Breast epithelium (tissue), 4 donors: ENCODE measurements at regions of chr2 and their contacts with region 1.

Region 1: GRCh38 chr2:83899271-83899670 is 559.8 kb downstream of the SUCLG1 start:
- DNase-seq: no peak
- H3K4me3 ChIP-seq: no peak overlapping the region
- H3K27ac ChIP-seq: no peak overlapping the region
- H3K4me1 ChIP-seq: no peaks in the 10 kb centered on the region
- H3K27me3 ChIP-seq: no peaks in the 10 kb centered on the region
- CTCF ChIP-seq: no peak
- POLR2A ChIP-seq: no peak

Region 2: DNA sequence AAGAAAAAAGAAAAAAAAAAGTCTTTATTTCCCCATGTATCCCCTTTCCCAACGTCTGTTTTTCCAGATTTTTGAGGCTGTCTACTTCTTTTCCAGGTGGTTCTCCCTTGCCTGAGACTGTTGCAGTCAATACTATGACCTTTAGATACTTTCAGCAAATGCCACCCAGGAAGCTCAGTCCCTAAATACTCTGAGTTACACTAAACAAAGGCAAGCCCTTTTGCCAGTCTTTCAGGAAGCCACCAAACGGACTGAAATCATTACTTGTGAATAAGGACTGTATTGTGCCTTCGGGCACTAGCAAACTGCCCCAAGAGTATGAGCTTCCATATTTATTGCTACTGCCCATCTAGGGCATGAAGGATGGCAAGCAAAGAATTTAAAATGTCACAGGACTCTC is 61.4 kb before region 1 on chr2:
- intact Hi-C with region 1: no loop called
- DNase-seq: no peak
- H3K4me3 ChIP-seq: no peak overlapping the region
- H3K27ac ChIP-seq: no peak overlapping the region
- H3K4me1 ChIP-seq: no peaks in the 10 kb centered on the region
- H3K27me3 ChIP-seq: no peaks in the 10 kb centered on the region
- CTCF ChIP-seq: no peak
- POLR2A ChIP-seq: no peak

Region 3: DNA sequence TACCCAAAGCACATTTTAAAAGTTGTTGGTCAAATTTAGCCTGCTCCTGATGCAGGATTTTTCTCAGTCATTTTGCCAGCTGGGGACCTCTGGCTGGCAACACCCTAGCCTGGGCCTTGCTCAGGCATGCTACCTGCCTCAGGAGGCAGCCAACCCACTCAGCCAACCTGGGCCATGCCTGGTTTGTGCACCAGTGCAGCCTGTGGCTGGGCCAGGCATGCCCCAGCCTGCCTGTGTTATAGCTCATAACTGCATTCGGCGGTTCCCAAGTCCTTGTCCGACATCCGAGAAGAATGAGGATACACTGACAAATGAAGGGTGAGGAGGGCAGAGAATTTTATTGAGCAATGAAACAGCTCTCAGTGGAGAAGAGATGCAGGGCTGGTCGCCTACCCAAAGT is 48.2 kb before region 1 on chr2:
- intact Hi-C with region 1: loop called (anchors 2 kb)
- DNase-seq: peak in 1 of 2 donors; percentile 40
- H3K4me3 ChIP-seq: no peak overlapping the region
- H3K27ac ChIP-seq: no peak overlapping the region
- H3K4me1 ChIP-seq: no peaks in the 10 kb centered on the region
- H3K27me3 ChIP-seq: no peaks in the 10 kb centered on the region
- CTCF ChIP-seq: no peak
- POLR2A ChIP-seq: no peak